Dendritic cell treated with granulocyte-macrophage colony-stimulating factor and Interleukin-4, amounts not matched to agents 40 ng/mL and 50 ng/mL, for 4 days (primary cell): ENCODE measurements at regions of chr7 and their contacts with region 1.

Region 1: GRCh38 chr7:93902777-93903423 is 3.5 kb upstream of the GNGT1 start:
- H3K4me3 Mint-ChIP-seq: no peak overlapping the region
- H3K27ac Mint-ChIP-seq: no peak overlapping the region
- H3K4me1 Mint-ChIP-seq: no peaks in the 10 kb centered on the region
- H3K27me3 Mint-ChIP-seq: peaks cover 9% of the 10 kb centered on the region

Region 2: GRCh38 chr7:93779115-93779514 is 123.8 kb before region 1 on chr7:
- intact Hi-C with region 1: no loop called
- H3K4me3 Mint-ChIP-seq: no peak overlapping the region
- H3K27ac Mint-ChIP-seq: no peak overlapping the region
- H3K4me1 Mint-ChIP-seq: no peaks in the 10 kb centered on the region
- H3K27me3 Mint-ChIP-seq: no peaks in the 10 kb centered on the region

Region 3: GRCh38 chr7:94087664-94088352 is 184.9 kb after region 1 on chr7:
- intact Hi-C with region 1: loop called (anchors 1 kb)
- H3K4me3 Mint-ChIP-seq: no peak overlapping the region
- H3K27ac Mint-ChIP-seq: no peak overlapping the region
- H3K4me1 Mint-ChIP-seq: peaks cover 18% of the 10 kb centered on the region
- H3K27me3 Mint-ChIP-seq: peaks cover 38% of the 10 kb centered on the region

Region 4: GRCh38 chr7:94276795-94277194 is 373.9 kb after region 1 on chr7:
- intact Hi-C with region 1: loop called (anchors 2 kb)
- H3K4me3 Mint-ChIP-seq: no peak overlapping the region
- H3K27ac Mint-ChIP-seq: no peak overlapping the region
- H3K4me1 Mint-ChIP-seq: no peaks in the 10 kb centered on the region
- H3K27me3 Mint-ChIP-seq: peaks cover 4% of the 10 kb centered on the region

Region 5: GRCh38 chr7:94436018-94436604 is 533.2 kb after region 1 on chr7:
- intact Hi-C with region 1: loop called (anchors 5 kb)
- H3K4me3 Mint-ChIP-seq: no peak overlapping the region
- H3K27ac Mint-ChIP-seq: no peak overlapping the region
- H3K4me1 Mint-ChIP-seq: peaks cover 4% of the 10 kb centered on the region
- H3K27me3 Mint-ChIP-seq: peaks cover 8% of the 10 kb centered on the region